SK-N-SH (cell line): ENCODE measurements at regions of chr5 and their contacts with region 1.

Region 1: GRCh38 chr5:140181002-140181483 is 6.1 kb downstream of the CYSTM1 start:
- DNase-seq: peak; percentile 39
- H3K4me3 ChIP-seq: no peak overlapping the region
- H3K27ac ChIP-seq: peak overlapping the region in 1 of 2 experiments; percentile 87; a peak in 2 of 4 replicates
- H3K4me1 ChIP-seq: peaks cover 11 to 36% of the 10 kb centered on the region in 2 experiments; a peak in 3 of 4 replicates
- H3K27me3 ChIP-seq: no peaks in the 10 kb centered on the region
- CTCF ChIP-seq: no peak
- EP300 ChIP-seq: peak in 1 of 2 experiments; percentile 92; a peak in 2 of 4 replicates
- RAD21 ChIP-seq: no peak

Region 2: GRCh38 chr5:139725073-139725830 is 455.8 kb before region 1 on chr5:
- CTCF ChIA-PET with region 1: no interaction called
- POLR2A ChIA-PET with region 1: no interaction called
- DNase-seq: peak; percentile 85
- H3K4me3 ChIP-seq: no peak overlapping the region
- H3K27ac ChIP-seq: peak overlapping the region; percentile 66 to 83; a peak in 3 of 4 replicates
- H3K4me1 ChIP-seq: peaks cover 12 to 17% of the 10 kb centered on the region in 2 experiments; a peak in 3 of 4 replicates
- H3K27me3 ChIP-seq: no peaks in the 10 kb centered on the region
- CTCF ChIP-seq: no peak
- EP300 ChIP-seq: peak; percentile 74 to 93
- RAD21 ChIP-seq: peak; percentile 21; the same call in 1 of the 2 replicates

Region 3: GRCh38 chr5:140169410-140169809 is 11.6 kb before region 1 on chr5:
- CTCF ChIA-PET with region 1: interaction called, 13 read pairs
- POLR2A ChIA-PET with region 1: no interaction called
- DNase-seq: no peak
- H3K4me3 ChIP-seq: no peak overlapping the region
- H3K27ac ChIP-seq: peak overlapping the region in 1 of 2 experiments; percentile 53; a peak in 1 of 4 replicates
- H3K4me1 ChIP-seq: peaks cover 5% of the 10 kb centered on the region in 2 experiments; a peak in 3 of 4 replicates
- H3K27me3 ChIP-seq: no peaks in the 10 kb centered on the region
- CTCF ChIP-seq: peak; percentile 29; the same call in 1 of the 2 replicates
- EP300 ChIP-seq: no peak
- RAD21 ChIP-seq: peak; percentile 50

Region 4: DNA sequence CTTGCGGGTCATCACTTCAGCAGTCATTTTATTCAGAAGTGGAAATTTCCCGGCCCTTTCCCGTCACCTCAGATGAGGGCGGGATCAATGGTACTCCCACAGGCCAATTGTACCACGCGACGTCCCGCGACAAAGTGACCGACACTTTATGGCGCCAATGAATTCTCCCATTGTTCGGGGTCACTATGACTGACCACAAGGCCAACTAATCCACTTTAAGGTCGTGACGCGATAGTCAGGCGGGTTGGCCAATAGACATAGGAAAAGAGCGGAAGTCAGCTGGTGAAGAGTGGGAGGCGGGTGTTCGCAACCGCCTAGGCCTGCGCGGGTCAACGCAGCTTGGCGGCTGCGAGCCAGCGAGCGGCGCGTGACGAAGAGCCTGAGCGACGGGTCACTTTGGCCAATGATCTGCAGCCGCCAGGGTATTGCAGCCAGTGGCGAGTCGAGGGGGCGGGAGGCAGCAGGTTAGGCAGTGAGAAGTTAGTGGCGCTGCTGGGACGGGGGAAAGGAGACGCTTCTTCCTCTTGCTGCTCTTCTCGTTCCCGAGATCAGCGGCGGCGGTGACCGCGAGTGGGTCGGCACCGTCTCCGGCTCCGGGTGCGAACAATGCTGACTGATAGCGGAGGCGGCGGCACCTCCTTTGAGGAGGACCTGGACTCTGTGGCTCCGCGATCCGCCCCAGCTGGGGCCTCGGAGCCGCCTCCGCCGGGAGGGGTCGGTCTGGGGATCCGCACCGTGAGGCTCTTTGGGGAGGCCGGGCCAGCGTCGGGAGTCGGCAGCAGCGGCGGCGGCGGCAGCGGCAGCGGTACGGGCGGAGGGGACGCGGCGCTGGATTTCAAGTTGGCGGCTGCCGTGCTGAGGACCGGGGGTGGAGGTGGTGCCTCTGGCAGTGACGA is 220.6 kb after region 1 on chr5 and contains the start of gene ANKHD1:
- CTCF ChIA-PET with region 1: no interaction called
- POLR2A ChIA-PET with region 1: no interaction called
- DNase-seq: peak; percentile 91
- H3K4me3 ChIP-seq: peak within 1 kb of the TSS; percentile 85 to 98
- H3K27ac ChIP-seq: peak within 1 kb of the TSS; percentile 88 to 95
- H3K4me1 ChIP-seq: peaks cover 0 to 4% of the 10 kb centered on the region in 2 experiments; a peak in 1 of 4 replicates
- H3K27me3 ChIP-seq: no peaks in the 10 kb centered on the region
- CTCF ChIP-seq: no peak
- EP300 ChIP-seq: no peak
- RAD21 ChIP-seq: no peak
- polyA plus RNA-seq, gene ANKHD1: 26.7 and 36.4 TPM in 2 replicates

Region 5: GRCh38 chr5:140509898-140510297 is 328.9 kb after region 1 on chr5:
- CTCF ChIA-PET with region 1: no interaction called
- POLR2A ChIA-PET with region 1: no interaction called
- DNase-seq: no peak
- H3K4me3 ChIP-seq: no peak overlapping the region
- H3K27ac ChIP-seq: no peak overlapping the region
- H3K4me1 ChIP-seq: no peaks in the 10 kb centered on the region
- H3K27me3 ChIP-seq: no peaks in the 10 kb centered on the region
- CTCF ChIP-seq: no peak
- EP300 ChIP-seq: no peak
- RAD21 ChIP-seq: no peak

Region 6: DNA sequence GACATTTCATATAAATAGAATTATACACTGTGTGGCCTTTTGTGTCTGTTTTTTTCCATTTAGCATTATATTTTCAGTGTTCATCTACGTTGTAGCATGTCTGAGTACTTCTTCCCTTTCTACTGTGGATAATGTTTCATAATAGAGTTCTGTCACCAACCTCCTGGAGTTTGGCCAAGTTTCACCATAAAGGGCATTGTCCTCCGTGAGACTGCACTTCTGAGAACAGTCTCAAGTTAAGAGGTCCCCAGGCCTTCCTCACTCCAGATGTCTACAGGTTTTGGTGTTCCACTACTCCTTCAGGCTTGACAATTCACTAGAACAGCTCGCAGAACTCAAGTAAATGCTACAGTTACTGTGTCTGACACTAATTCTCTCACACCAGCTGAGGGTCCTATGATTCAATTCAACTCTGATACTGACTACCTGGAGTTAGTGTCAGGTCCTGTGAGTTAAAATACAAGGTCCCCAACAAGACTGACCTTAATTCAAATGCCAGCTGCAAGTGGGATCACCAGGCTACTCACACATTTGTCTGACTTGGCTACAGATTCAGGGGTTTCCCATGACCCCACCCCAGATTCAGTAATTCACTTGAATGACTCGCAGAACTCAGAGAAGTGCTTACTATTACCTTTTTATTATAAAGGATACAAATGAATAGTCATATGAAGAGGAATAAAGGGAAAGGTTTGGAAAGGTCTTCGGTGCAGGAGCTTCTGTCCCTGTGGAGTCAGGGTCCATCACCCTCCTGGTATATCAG is 414.7 kb after region 1 on chr5:
- CTCF ChIA-PET with region 1: no interaction called
- POLR2A ChIA-PET with region 1: no interaction called
- DNase-seq: no peak
- H3K4me3 ChIP-seq: no peak overlapping the region
- H3K27ac ChIP-seq: no peak overlapping the region
- H3K4me1 ChIP-seq: peaks cover 0 to 3% of the 10 kb centered on the region in 2 experiments; a peak in 1 of 4 replicates
- H3K27me3 ChIP-seq: no peaks in the 10 kb centered on the region
- CTCF ChIP-seq: no peak
- EP300 ChIP-seq: no peak
- RAD21 ChIP-seq: no peak